ENCODE measurements at regions of chr3 and their contacts with region 1.

Region 1: DNA sequence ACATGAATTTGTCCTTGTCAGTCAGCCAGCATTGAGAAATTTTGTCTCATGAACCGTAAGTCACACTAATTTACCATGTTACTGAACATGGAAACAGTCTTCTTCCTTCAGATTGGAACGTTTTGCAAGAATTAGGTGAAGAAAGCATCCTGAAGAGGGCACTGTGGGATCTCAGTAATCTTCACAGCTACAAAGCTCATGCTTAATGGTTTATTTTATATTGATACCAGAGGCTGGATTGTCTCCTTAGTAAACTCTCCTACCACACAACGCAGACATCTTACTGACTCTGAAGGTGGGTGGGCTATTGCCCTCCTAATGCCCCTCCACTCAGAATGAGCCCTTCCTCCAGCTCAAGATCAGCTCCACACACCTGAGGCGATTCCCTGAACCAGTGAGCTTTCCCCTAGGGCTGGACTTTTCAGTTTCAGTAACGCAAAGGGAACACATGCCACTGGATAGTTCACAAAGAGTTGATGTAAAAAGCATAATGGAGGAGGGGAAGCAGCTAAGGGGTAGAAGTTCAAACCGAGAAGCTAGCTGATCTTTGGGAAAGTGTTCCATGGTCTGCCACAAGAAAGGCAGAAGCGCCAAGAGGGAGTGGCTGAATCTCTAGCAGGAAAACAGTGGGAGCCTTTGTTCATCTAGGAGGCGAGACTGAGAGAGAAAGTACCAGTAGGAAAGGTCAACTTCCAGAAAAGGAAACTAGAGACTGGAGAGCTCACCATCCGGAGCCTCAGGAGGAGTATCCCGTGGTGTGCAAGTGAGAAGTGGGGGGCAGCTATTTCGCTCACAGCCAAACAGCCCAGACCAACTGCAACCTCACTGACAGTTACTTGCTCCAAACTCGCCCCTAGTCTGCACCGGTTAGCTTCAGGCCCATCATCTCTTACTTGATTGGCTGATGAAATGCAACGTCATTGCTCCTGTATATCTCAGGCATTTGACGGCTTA is at the start of gene SLC9C1:
- DNase-seq: peak; percentile 62
- ATAC-seq: peak; percentile 79
- H3K4me3 Mint-ChIP-seq: peak within 1 kb of the TSS; percentile 45
- H3K27ac Mint-ChIP-seq: peak within 1 kb of the TSS; percentile 76
- H3K4me1 Mint-ChIP-seq: peaks cover 37% of the 10 kb centered on the region
- H3K27me3 Mint-ChIP-seq: no peaks in the 10 kb centered on the region
- total RNA-seq, gene SLC9C1: 0.28 TPM in 1 of 2 experiments, not detected in the other

Region 2: GRCh38 chr3:112013058-112013783 is 280.4 kb before region 1 on chr3:
- CTCF ChIA-PET with region 1: no interaction called
- DNase-seq: peak; percentile 70
- ATAC-seq: peak; percentile 81
- H3K4me3 Mint-ChIP-seq: no peak overlapping the region
- H3K27ac Mint-ChIP-seq: no peak overlapping the region
- H3K4me1 Mint-ChIP-seq: peaks cover 13% of the 10 kb centered on the region
- H3K27me3 Mint-ChIP-seq: no peaks in the 10 kb centered on the region

Region 3: DNA sequence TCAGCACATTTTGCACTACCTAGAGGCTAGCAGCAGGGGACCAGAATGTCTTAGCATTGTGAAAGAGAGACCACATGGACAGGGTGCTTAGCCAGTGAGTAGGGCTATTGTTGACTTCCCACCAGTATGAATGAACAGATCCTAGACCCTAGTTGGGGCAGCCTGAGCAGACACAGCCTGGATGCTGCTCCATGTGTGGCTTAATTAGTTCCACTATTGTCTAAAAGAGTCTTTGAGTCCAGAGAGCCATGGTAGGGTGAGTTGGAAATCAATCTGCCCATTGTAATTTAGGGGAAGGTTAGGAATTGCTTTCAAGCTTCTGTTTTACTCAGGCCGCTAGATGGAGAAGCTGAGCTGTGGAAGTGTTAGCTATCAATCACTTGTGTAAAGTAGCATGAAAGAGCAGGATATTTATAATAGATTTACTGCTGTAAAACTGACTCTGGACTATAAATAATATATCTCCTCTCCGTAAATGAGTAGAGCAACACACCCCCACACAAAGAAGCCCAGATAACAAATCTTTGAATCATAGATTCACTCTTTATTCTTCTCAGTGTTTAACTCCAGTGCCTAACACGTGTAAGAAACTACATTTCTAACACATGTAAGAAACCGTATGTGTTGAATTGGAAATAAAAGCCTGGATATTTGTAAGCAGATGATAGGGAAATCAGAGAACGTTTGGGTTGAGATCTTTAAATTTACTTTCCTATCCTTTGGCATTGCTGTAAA is 156.5 kb before region 1 on chr3:
- CTCF ChIA-PET with region 1: interaction called, 14 read pairs
- DNase-seq: peak; percentile 65
- ATAC-seq: no peak
- H3K4me3 Mint-ChIP-seq: no peak overlapping the region
- H3K27ac Mint-ChIP-seq: no peak overlapping the region
- H3K4me1 Mint-ChIP-seq: peaks cover 38% of the 10 kb centered on the region
- H3K27me3 Mint-ChIP-seq: no peaks in the 10 kb centered on the region

Region 4: DNA sequence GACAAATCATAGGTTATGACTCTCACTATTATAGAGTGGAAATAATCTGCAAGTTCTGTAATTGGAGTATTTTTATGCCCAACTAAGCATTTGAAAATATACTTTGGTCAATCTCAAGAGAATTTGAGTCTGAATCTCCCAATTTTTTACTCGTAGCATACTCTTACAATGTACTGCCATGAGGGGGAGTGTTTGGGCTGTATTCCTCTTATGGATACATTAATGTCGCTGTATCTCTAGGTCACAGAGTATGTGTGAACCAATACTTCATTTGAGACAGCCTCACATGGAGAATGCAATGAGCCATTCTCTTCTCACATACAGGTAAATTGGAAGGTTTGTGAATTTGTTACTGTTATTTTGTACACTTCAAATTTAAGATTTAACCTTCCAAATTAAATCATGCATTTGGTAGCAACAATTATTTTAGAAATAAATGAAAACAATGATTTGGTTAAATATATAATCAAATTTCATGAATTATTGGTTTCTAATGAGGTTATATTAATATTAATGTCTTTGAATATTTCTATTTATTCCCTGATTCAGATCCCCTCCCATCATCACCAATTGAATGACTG is 33.8 kb after region 1 on chr3:
- CTCF ChIA-PET with region 1: interaction called, 12 read pairs
- DNase-seq: no peak
- ATAC-seq: peak; percentile 99
- H3K4me3 Mint-ChIP-seq: no peak overlapping the region
- H3K27ac Mint-ChIP-seq: no peak overlapping the region
- H3K4me1 Mint-ChIP-seq: peaks cover 4% of the 10 kb centered on the region
- H3K27me3 Mint-ChIP-seq: peaks cover 13% of the 10 kb centered on the region

Region 5: DNA sequence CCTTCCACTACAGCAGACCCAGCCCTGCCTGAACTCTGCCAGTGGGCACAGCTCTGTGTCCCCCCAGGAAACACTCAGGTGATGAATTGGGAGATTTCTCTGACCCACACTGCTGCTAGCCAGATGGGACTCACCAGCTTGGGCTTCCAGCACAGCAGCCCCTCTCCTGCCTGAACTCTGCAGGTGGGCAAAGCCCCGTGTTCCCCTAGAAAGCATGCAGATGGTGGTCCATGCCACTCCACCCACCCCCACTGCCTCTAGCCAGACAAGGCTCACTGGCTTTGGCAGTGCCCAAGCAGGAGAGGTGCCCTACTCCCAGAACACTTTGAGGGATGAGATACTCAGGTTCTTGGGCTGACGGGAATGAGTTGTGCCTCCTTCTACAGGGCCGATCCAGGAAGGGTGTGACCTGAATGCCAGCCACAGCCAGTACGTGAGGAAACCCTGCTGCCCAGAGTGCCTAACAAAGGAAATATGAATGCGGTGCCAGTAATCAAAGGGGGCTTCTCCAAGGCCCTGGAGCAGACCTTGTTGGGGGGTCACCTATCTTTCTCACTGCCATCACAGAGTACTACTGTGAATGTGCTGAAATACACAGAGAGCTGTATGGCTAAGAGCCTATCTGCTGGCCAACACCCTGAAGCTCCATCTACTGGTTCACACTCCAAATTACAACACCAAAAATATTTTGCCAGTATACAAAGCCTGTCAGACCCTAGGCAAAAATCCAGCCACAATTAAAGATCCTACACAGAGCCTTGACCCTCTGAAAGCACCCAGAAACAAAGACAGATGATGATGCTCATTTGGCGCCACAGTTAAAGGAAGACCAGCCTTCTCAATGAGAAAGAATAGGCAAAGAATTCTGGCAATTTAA is 143.7 kb after region 1 on chr3:
- CTCF ChIA-PET with region 1: interaction called, 19 read pairs
- DNase-seq: peak; percentile 41
- ATAC-seq: peak; percentile 92
- H3K4me3 Mint-ChIP-seq: no peak overlapping the region
- H3K27ac Mint-ChIP-seq: peak overlapping the region; percentile 41
- H3K4me1 Mint-ChIP-seq: peaks cover 17% of the 10 kb centered on the region
- H3K27me3 Mint-ChIP-seq: no peaks in the 10 kb centered on the region

Region 6: GRCh38 chr3:112531358-112531781 is 237.7 kb after region 1 on chr3:
- CTCF ChIA-PET with region 1: interaction called, 15 read pairs
- DNase-seq: no peak
- ATAC-seq: no peak
- H3K4me3 Mint-ChIP-seq: no peak overlapping the region
- H3K27ac Mint-ChIP-seq: no peak overlapping the region
- H3K4me1 Mint-ChIP-seq: no peaks in the 10 kb centered on the region
- H3K27me3 Mint-ChIP-seq: no peaks in the 10 kb centered on the region